ENCODE measurements at regions of chr16 and their contacts with region 1.

Region 1: DNA sequence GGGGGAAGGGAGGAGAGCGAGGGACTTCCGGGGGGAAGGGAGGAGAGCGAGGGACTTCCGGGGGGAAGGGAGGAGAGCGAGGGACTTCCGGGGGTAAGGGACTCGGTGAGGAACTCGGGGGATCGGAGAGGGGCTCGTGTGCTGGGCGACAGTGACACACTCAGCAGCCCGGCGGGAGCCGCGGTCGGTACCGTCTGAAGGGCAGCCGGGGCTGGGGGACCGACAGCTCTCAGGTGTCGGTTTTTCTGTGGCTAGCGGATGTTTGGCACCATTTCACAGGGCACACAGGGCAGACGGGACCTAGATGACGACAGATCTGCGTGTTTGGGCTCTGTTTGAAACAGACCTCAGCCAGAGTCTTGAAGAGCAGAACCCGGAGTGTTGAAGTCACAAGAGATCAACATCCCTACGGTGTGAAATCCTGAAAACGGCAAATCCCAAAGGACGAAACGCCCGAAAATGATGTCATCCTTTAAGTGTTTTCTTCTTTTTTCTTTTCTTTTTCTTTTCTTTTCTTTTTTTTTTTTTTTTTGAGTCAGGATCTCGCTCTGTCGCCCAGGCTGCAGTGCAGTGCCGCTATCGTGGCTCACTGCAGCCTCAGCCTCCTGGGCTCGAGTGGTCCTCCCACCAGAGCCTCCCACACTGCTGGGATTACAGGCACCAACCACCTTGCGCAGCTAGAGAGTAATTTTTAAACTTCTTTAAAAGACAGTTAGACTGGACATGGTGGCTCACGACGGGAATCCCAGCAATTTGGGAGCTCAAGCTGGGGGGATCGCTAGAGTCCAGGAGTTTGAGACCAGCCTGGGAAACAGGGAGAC is 23.9 kb downstream of the ZNF778 start:
- DNase-seq: peak; percentile 51 to 85
- H3K4me3 ChIP-seq: peak overlapping the region; percentile 66 to 95
- H3K27ac ChIP-seq: peak overlapping the region; percentile 91 to 99
- H3K4me1 ChIP-seq: peaks cover 0 to 10% (median 6%) of the 10 kb centered on the region in 4 donors
- H3K27me3 ChIP-seq: no peaks in the 10 kb centered on the region
- CTCF ChIP-seq: no peak

Region 2: DNA sequence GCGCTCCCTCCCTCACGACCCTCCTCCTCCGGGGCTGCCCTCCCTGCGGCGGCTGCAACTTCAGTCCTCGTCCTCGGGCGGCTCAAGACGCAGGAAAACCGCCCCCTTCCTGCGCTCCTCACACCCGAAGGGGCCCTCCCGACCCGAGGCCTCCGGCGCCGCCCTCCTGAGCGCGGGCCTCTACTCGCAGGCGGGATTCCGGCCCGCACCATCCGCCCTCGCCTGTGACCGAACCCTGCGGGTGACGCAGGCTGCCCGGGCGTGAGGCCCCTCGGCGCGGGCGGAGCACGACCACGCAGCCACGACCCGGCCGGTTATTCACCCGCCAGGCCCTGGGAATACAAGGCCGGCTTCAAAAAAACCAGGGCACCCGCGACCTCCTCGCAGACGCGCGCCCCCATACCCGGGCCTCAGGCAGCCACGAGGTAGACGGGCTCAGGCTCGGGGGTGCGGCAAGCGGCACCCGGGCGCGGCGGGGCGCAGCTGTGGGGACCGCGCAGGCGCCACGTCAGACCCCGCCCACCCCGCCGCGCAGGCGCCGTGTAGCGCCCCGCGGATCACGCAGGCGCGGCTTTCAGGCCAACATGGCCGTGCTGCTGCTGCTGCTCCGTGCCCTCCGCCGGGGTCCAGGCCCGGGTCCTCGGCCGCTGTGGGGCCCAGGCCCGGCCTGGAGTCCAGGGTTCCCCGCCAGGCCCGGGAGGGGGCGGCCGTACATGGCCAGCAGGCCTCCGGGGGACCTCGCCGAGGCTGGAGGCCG is 266.6 kb after region 1 on chr16 and contains the start of gene SPG7:
- intact Hi-C with region 1: loop called (anchors 10 kb)
- DNase-seq: peak; percentile 75 to 90
- H3K4me3 ChIP-seq: peak within 1 kb of the TSS; percentile 83 to 88
- H3K27ac ChIP-seq: peak within 1 kb of the TSS; percentile 85 to 90
- H3K4me1 ChIP-seq: peaks cover 0 to 39% (median 25%) of the 10 kb centered on the region in 4 donors
- H3K27me3 ChIP-seq: no peaks in the 10 kb centered on the region
- CTCF ChIP-seq: no peak